Endothelial cell of umbilical vein (primary cell): ENCODE measurements at regions of chr4 and their contacts with region 1.

Region 1: DNA sequence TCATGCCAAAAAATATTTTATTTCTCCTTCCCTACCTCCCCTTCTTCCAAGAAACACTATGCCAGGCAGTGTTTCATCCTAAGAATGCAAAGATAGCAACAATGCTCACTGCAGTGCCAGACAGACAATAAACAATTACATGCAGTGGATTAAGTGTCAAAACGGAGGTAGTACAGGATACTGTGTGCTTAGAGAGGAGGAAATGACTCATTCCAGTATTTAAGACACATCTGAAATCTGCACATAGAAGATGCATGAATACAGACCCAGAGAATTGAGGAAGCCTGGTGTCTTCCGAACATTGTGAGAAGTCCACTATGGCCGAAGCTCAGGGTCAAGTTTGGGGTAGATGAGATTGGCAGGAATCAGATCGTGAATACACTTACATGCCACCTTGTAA is 326.4 kb downstream of the PPP3CA start:
- DNase-seq: peak; percentile 94
- H3K4me3 ChIP-seq: no peak overlapping the region
- H3K27ac ChIP-seq: peak overlapping the region; percentile 88
- H3K4me1 ChIP-seq: peaks cover 35% of the 10 kb centered on the region
- H3K27me3 ChIP-seq: no peaks in the 10 kb centered on the region
- CTCF ChIP-seq: no peak
- POLR2A ChIP-seq: no peak

Region 2: GRCh38 chr4:99949034-99949998 is 1071.6 kb before region 1 on chr4:
- CTCF ChIA-PET with region 1: no interaction called
- POLR2A ChIA-PET with region 1: no interaction called
- dilution Hi-C with region 1: no loop called
- intact Hi-C with region 1: loop called (anchors 10 kb)
- DNase-seq: peak; percentile 91
- H3K4me3 ChIP-seq: peak overlapping the region; percentile 66 to 87 (median 86)
- H3K27ac ChIP-seq: peak overlapping the region; percentile 75
- H3K4me1 ChIP-seq: peaks cover 38% of the 10 kb centered on the region
- H3K27me3 ChIP-seq: no peaks in the 10 kb centered on the region
- CTCF ChIP-seq: peak; percentile 83 to 91
- POLR2A ChIP-seq: no peak

Region 3: GRCh38 chr4:100736641-100737451 is 284.1 kb before region 1 on chr4:
- CTCF ChIA-PET with region 1: no interaction called
- POLR2A ChIA-PET with region 1: no interaction called
- dilution Hi-C with region 1: no loop called
- intact Hi-C with region 1: loop called (anchors 1 kb)
- DNase-seq: peak; percentile 97
- H3K4me3 ChIP-seq: no peak overlapping the region
- H3K27ac ChIP-seq: peak overlapping the region; percentile 83
- H3K4me1 ChIP-seq: peaks cover 27% of the 10 kb centered on the region
- H3K27me3 ChIP-seq: no peaks in the 10 kb centered on the region
- CTCF ChIP-seq: no peak
- POLR2A ChIP-seq: peak; percentile 42

Region 4: GRCh38 chr4:100926039-100926717 is 94.8 kb before region 1 on chr4:
- CTCF ChIA-PET with region 1: no interaction called
- POLR2A ChIA-PET with region 1: no interaction called
- dilution Hi-C with region 1: no loop called
- intact Hi-C with region 1: no loop called
- DNase-seq: no peak
- H3K4me3 ChIP-seq: no peak overlapping the region
- H3K27ac ChIP-seq: no peak overlapping the region
- H3K4me1 ChIP-seq: no peaks in the 10 kb centered on the region
- H3K27me3 ChIP-seq: no peaks in the 10 kb centered on the region
- CTCF ChIP-seq: no peak
- POLR2A ChIP-seq: no peak

Region 5: DNA sequence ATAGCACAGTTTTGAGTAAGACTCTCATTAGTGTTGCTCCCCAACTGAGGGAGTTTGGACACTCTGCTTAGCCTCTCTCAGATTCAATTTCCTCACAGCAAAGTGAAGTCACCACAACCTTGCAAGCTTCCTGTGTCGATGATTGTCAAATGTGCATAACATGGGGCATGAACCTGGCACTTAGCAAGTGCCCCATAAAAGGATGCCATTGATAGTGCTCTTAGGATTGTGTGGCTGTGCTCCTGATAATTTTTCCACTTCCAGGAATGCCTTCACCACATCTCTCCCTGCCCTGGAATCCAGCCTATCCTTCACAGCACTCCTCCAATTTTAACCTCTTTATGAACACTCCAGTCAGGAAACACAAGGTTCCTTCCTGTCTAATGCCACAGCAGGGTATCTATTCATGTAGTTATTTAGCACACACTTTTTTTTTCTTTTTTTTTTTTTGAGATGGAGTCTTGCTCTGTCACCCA is 17.0 kb after region 1 on chr4:
- CTCF ChIA-PET with region 1: interaction called, 3 read pairs
- POLR2A ChIA-PET with region 1: no interaction called
- dilution Hi-C with region 1: no loop called
- intact Hi-C with region 1: loop called (anchors 1 kb)
- DNase-seq: peak; percentile 78
- H3K4me3 ChIP-seq: no peak overlapping the region
- H3K27ac ChIP-seq: peak overlapping the region; percentile 83
- H3K4me1 ChIP-seq: peaks cover 18% of the 10 kb centered on the region
- H3K27me3 ChIP-seq: no peaks in the 10 kb centered on the region
- CTCF ChIP-seq: no peak
- POLR2A ChIP-seq: no peak

Region 6: GRCh38 chr4:101103381-101104142 is 82.6 kb after region 1 on chr4:
- CTCF ChIA-PET with region 1: interaction called, 5 read pairs
- POLR2A ChIA-PET with region 1: no interaction called
- dilution Hi-C with region 1: no loop called
- intact Hi-C with region 1: loop called (anchors 1 kb)
- DNase-seq: peak; percentile 87
- H3K4me3 ChIP-seq: no peak overlapping the region
- H3K27ac ChIP-seq: peak overlapping the region; percentile 56
- H3K4me1 ChIP-seq: peaks cover 28% of the 10 kb centered on the region
- H3K27me3 ChIP-seq: no peaks in the 10 kb centered on the region
- CTCF ChIP-seq: no peak
- POLR2A ChIP-seq: no peak